ENCODE measurements at regions of chr19 and their contacts with region 1.

Region 1: GRCh38 chr19:6048808-6049405 is 61.4 kb downstream of the RFX2 start:
- DNase-seq: peak; percentile 65
- ATAC-seq: peak; percentile 99
- H3K4me3 ChIP-seq: no peak overlapping the region
- H3K27ac ChIP-seq: no peak overlapping the region
- H3K4me1 ChIP-seq: no peaks in the 10 kb centered on the region
- H3K27me3 ChIP-seq: no peaks in the 10 kb centered on the region
- CTCF ChIP-seq: peak; percentile 94
- POLR2A ChIP-seq: peak; percentile 60; the same call in 1 of the 2 replicates
- RAD21 ChIP-seq: peak; percentile 98

Region 2: GRCh38 chr19:5904352-5905113 is 144.4 kb before region 1 on chr19 and contains the start of gene VMAC:
- CTCF ChIA-PET with region 1: no interaction called
- POLR2A ChIA-PET with region 1: interaction called, 11 read pairs
- dilution Hi-C with region 1: no loop called
- in situ Hi-C with region 1: no loop called
- intact Hi-C with region 1: no loop called
- DNase-seq: peak; percentile 100
- ATAC-seq: peak; percentile 81
- H3K4me3 ChIP-seq: peak within 1 kb of the TSS; percentile 91
- H3K27ac ChIP-seq: peak within 1 kb of the TSS; percentile 70
- H3K4me1 ChIP-seq: peaks cover 4% of the 10 kb centered on the region
- H3K27me3 ChIP-seq: no peaks in the 10 kb centered on the region
- CTCF ChIP-seq: no peak
- POLR2A ChIP-seq: no peak
- RAD21 ChIP-seq: no peak
- total RNA-seq, gene VMAC: 1.4 and 1.7 TPM in 2 replicates

Region 3: GRCh38 chr19:6011794-6012193 is 37.1 kb before region 1 on chr19:
- CTCF ChIA-PET with region 1: no interaction called
- POLR2A ChIA-PET with region 1: no interaction called
- dilution Hi-C with region 1: no loop called
- in situ Hi-C with region 1: no loop called
- intact Hi-C with region 1: no loop called
- DNase-seq: peak; percentile 22
- ATAC-seq: peak; percentile 49; the same call in 1 of the 2 replicates
- H3K4me3 ChIP-seq: no peak overlapping the region
- H3K27ac ChIP-seq: no peak overlapping the region
- H3K4me1 ChIP-seq: no peaks in the 10 kb centered on the region
- H3K27me3 ChIP-seq: no peaks in the 10 kb centered on the region
- CTCF ChIP-seq: no peak
- POLR2A ChIP-seq: no peak
- RAD21 ChIP-seq: no peak

Region 4: GRCh38 chr19:6021878-6022569 is 26.9 kb before region 1 on chr19:
- CTCF ChIA-PET with region 1: no interaction called
- POLR2A ChIA-PET with region 1: no interaction called
- dilution Hi-C with region 1: no loop called
- in situ Hi-C with region 1: no loop called
- intact Hi-C with region 1: no loop called
- DNase-seq: peak; percentile 69
- ATAC-seq: peak; percentile 86
- H3K4me3 ChIP-seq: no peak overlapping the region
- H3K27ac ChIP-seq: no peak overlapping the region
- H3K4me1 ChIP-seq: peaks cover 9% of the 10 kb centered on the region
- H3K27me3 ChIP-seq: no peaks in the 10 kb centered on the region
- CTCF ChIP-seq: peak; percentile 67
- POLR2A ChIP-seq: no peak
- RAD21 ChIP-seq: peak; percentile 69

Region 5: DNA sequence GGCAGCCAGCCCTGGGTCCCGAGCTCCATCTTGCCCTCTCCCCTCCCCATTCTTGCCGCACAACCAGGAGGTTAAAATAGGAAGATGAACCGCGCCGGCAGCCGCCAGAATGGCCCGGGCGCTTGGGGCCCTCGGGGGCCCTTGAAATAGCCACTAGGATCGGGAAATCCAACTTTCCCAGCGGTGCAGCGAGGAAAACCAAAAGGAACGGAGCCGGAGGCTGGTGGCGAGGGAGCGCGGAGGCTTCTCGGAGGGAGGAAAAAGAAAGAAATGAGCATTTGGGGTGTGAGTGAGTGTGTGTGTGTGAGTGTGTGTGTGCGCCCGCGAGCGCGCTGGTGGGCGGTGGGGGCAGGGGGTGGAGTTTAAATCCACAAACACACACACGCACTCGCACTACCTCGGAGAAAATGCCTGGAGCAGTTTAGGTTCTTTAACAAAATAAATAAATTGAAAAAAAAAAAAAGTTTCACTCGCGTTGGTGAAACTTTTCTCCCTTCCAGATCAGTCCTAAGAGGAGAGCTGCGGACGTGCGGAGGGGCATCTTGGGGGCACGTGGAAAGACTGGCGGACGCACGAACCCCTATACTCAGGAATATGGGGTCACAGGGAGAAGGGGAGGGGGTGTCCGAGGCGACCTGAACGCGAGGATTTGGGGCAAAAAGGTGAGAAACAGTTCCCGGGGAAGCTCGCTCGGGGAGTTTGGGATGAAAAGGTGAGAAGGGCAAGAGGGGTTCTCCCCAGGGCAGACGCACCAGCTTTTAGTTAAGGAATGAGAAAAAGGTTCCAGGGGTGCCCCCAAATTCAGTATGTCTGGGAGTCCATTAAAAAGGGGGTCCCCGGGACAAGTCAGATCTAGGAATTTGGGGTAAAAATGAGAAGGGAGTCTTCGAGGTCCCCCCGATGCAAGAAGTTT is 60.1 kb after region 1 on chr19:
- CTCF ChIA-PET with region 1: no interaction called
- POLR2A ChIA-PET with region 1: interaction called, 8 read pairs
- dilution Hi-C with region 1: no loop called
- in situ Hi-C with region 1: no loop called
- intact Hi-C with region 1: loop called (anchors 5 kb)
- DNase-seq: peak; percentile 66
- ATAC-seq: peak; percentile 4; the same call in 1 of the 2 replicates
- H3K4me3 ChIP-seq: peak overlapping the region; percentile 64
- H3K27ac ChIP-seq: peak overlapping the region; percentile 67
- H3K4me1 ChIP-seq: peaks cover 8% of the 10 kb centered on the region
- H3K27me3 ChIP-seq: no peaks in the 10 kb centered on the region
- CTCF ChIP-seq: no peak
- POLR2A ChIP-seq: peak; percentile 19; the same call in 1 of the 2 replicates
- RAD21 ChIP-seq: no peak; the same call in 1 of the 2 replicates

Region 6: DNA sequence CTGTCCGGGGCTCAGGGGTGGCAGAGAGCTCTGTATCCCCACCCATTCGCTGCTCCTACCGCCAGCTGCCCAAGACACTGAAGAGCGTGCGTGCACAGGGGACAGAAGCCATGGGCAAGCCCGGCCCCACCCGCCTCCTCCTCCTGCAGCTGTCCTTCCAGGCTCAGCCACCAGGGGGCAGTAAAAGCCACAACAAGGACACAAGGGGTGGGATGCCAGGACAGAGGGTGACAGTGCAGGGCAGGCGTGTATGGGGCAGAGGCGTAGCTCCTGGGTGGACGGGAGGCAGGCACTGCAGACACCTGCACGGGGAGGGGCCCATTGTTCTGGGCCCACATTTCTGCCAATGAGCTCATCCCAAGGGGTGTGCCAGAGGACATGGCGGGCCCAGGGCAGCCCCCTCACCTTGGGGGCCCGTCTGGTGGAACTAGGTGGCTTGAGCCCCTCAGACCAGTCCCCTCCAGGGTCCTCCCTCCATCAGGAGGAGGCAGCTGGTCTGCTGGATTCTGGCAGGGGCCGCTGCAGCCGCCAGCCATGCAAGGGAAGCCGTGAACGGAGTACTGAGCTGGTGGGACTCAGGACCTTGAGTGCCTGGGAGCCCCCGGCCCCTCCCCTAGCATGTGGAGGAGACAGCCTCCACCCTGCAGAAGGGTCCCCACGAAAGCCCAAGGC is 169.7 kb after region 1 on chr19:
- CTCF ChIA-PET with region 1: no interaction called
- POLR2A ChIA-PET with region 1: no interaction called
- dilution Hi-C with region 1: no loop called
- in situ Hi-C with region 1: no loop called
- intact Hi-C with region 1: loop called (anchors 2 kb)
- DNase-seq: peak; percentile 75
- ATAC-seq: peak; percentile 86
- H3K4me3 ChIP-seq: no peak overlapping the region
- H3K27ac ChIP-seq: no peak overlapping the region
- H3K4me1 ChIP-seq: peaks cover 16% of the 10 kb centered on the region
- H3K27me3 ChIP-seq: no peaks in the 10 kb centered on the region
- CTCF ChIP-seq: peak; percentile 92
- POLR2A ChIP-seq: no peak
- RAD21 ChIP-seq: peak; percentile 93

Region 7: DNA sequence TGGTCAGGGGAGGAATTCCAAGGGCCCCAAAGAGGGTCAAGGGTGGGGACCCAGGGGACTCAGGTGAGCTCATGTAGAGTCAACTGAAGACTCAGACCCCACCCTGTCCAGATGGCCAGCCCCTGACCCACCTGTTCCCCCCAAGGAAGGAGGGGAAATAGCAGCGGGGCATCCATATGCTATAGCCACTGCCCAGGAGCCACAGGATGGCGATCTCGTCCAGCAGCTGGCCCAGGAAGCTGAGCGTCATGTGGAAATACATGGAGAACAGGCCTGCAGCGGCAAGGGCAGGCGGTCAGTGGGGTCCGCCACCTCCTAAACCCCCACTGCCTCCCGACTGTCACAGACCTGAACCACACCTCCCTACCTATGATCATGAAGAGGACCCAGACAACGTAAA is 263.1 kb after region 1 on chr19:
- CTCF ChIA-PET with region 1: interaction called, 7 read pairs
- POLR2A ChIA-PET with region 1: no interaction called
- dilution Hi-C with region 1: no loop called
- in situ Hi-C with region 1: loop called (anchors 10 kb)
- intact Hi-C with region 1: no loop called
- DNase-seq: no peak
- ATAC-seq: no peak
- H3K4me3 ChIP-seq: no peak overlapping the region
- H3K27ac ChIP-seq: no peak overlapping the region
- H3K4me1 ChIP-seq: no peaks in the 10 kb centered on the region
- H3K27me3 ChIP-seq: peaks cover 6% of the 10 kb centered on the region; the same call in 1 of the 2 replicates
- CTCF ChIP-seq: no peak
- POLR2A ChIP-seq: no peak
- RAD21 ChIP-seq: no peak

Region 8: DNA sequence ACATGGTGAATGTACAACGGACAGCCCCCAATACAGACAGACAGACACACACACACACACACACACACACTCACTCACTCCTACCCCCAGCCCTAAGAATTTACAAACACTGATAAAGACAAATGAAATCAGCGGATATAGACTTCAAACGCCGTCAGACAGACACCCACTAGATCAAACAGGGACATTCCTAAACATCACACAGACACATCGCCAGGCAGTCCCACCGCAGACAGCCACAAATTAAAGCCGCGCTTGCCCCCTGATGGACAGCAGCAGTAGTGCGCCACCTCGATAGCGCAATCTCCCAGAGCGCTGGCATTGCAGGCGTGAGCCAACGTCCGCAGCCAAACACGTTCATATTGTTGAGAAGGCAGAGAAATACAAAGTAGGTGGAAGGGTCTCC is 813.8 kb after region 1 on chr19:
- CTCF ChIA-PET with region 1: no interaction called
- POLR2A ChIA-PET with region 1: no interaction called
- dilution Hi-C with region 1: no loop called
- in situ Hi-C with region 1: no loop called
- intact Hi-C with region 1: loop called (anchors 2 kb)
- DNase-seq: peak; percentile 69
- ATAC-seq: peak; percentile 91
- H3K4me3 ChIP-seq: no peak overlapping the region
- H3K27ac ChIP-seq: no peak overlapping the region
- H3K4me1 ChIP-seq: no peaks in the 10 kb centered on the region
- H3K27me3 ChIP-seq: no peaks in the 10 kb centered on the region
- CTCF ChIP-seq: peak; percentile 88
- POLR2A ChIP-seq: no peak
- RAD21 ChIP-seq: peak; percentile 84